Activated CD8-positive, alpha-beta T cell treated with anti-CD3 and anti-CD28 coated beads, Interleukin-2, amount 10 ng/mL, durations not matched to agents 7 days and 5 days (primary cell): ENCODE measurements at regions of chr19 and their contacts with region 1.

Region 1: GRCh38 chr19:12722566-12723380 is 959 bp downstream of the TNPO2 start:
- DNase-seq: peak; percentile 98
- ATAC-seq: peak; percentile 91
- H3K4me3 Mint-ChIP-seq: peak overlapping the region; percentile 85
- H3K27ac Mint-ChIP-seq: peak overlapping the region; percentile 86
- H3K4me1 Mint-ChIP-seq: peaks cover 29% of the 10 kb centered on the region
- H3K27me3 Mint-ChIP-seq: no peaks in the 10 kb centered on the region

Region 2: GRCh38 chr19:12736995-12737834 is 14.4 kb after region 1 on chr19 and contains the start of gene GET3:
- CTCF ChIA-PET with region 1: interaction called, 85 read pairs
- POLR2A ChIA-PET with region 1: interaction called, 109 read pairs
- DNase-seq: peak; percentile 89
- ATAC-seq: peak; percentile 85
- H3K4me3 Mint-ChIP-seq: peak within 1 kb of the TSS; percentile 100
- H3K27ac Mint-ChIP-seq: peak within 1 kb of the TSS; percentile 98
- H3K4me1 Mint-ChIP-seq: peaks cover 43% of the 10 kb centered on the region
- H3K27me3 Mint-ChIP-seq: no peaks in the 10 kb centered on the region
- total RNA-seq, gene GET3: 66.8 to 71.5 TPM

Region 3: GRCh38 chr19:12748489-12748888 is 25.7 kb after region 1 on chr19:
- CTCF ChIA-PET with region 1: no interaction called
- POLR2A ChIA-PET with region 1: no interaction called
- DNase-seq: no peak
- ATAC-seq: no peak
- H3K4me3 Mint-ChIP-seq: no peak overlapping the region
- H3K27ac Mint-ChIP-seq: no peak overlapping the region
- H3K4me1 Mint-ChIP-seq: no peaks in the 10 kb centered on the region
- H3K27me3 Mint-ChIP-seq: peaks cover 12% of the 10 kb centered on the region

Region 4: GRCh38 chr19:12815088-12815487 is 92.3 kb after region 1 on chr19:
- CTCF ChIA-PET with region 1: no interaction called
- POLR2A ChIA-PET with region 1: no interaction called
- DNase-seq: no peak
- ATAC-seq: no peak
- H3K4me3 Mint-ChIP-seq: no peak overlapping the region
- H3K27ac Mint-ChIP-seq: no peak overlapping the region
- H3K4me1 Mint-ChIP-seq: no peaks in the 10 kb centered on the region
- H3K27me3 Mint-ChIP-seq: no peaks in the 10 kb centered on the region

Region 5: DNA sequence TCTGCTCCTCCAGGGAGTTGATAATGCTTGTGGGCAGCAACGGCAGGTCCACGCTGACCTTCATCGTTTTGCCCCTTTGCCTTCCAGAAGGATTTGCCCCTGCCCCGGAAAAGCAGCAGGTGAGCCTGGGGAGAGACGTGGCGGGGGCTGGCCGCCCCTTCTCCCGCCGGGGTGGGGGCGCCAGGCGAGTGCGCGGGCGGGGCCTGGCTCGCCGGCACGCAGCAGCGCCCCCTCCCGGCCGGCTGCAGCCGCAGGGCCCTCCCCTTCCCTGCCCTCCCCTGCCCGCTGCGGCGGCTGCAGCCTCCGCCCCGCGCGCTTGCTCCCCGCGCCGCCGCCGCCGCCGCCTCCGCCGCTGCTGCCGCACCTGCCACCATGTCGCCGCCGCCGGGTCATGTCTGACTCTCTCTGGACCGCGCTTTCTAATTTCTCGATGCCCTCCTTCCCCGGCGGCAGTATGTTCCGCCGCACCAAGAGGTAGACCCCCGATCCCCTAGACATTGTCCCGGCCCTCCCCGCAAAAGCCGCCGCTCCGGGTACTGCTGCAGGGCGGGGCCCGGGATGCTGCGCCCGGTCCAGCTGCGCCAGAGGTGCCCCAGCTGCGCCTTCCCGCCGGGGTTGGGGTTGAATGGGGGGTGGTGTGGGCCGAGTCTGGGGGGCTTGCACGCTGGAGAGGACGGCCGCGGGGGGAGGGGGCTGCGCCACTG is 115.6 kb after region 1 on chr19 and contains the start of gene MAST1:
- CTCF ChIA-PET with region 1: no interaction called
- POLR2A ChIA-PET with region 1: no interaction called
- DNase-seq: peak; percentile 64
- ATAC-seq: peak; percentile 65
- H3K4me3 Mint-ChIP-seq: peak within 1 kb of the TSS; percentile 26
- H3K27ac Mint-ChIP-seq: no peak within 1 kb of the TSS
- H3K4me1 Mint-ChIP-seq: peaks cover 27% of the 10 kb centered on the region
- H3K27me3 Mint-ChIP-seq: peaks cover 74% of the 10 kb centered on the region
- total RNA-seq, gene MAST1: 0.89 to 1.3 TPM

Region 6: GRCh38 chr19:12864721-12865715 is 142.2 kb after region 1 on chr19:
- CTCF ChIA-PET with region 1: no interaction called
- POLR2A ChIA-PET with region 1: no interaction called
- DNase-seq: no peak
- ATAC-seq: no peak
- H3K4me3 Mint-ChIP-seq: no peak overlapping the region
- H3K27ac Mint-ChIP-seq: no peak overlapping the region
- H3K4me1 Mint-ChIP-seq: peaks cover 18% of the 10 kb centered on the region
- H3K27me3 Mint-ChIP-seq: no peaks in the 10 kb centered on the region